HEK293 (cell line): ENCODE measurements at regions of chr3 and their contacts with region 1.

Region 1: GRCh38 chr3:72938471-72939265 is 50.8 kb downstream of the GXYLT2 start:
- H3K4me3 ChIP-seq: no peak overlapping the region
- H3K27ac ChIP-seq: no peak overlapping the region
- H3K4me1 ChIP-seq: no peaks in the 10 kb centered on the region
- CTCF ChIP-seq: peak; percentile 39; the same call in 1 of the 2 replicates

Region 2: DNA sequence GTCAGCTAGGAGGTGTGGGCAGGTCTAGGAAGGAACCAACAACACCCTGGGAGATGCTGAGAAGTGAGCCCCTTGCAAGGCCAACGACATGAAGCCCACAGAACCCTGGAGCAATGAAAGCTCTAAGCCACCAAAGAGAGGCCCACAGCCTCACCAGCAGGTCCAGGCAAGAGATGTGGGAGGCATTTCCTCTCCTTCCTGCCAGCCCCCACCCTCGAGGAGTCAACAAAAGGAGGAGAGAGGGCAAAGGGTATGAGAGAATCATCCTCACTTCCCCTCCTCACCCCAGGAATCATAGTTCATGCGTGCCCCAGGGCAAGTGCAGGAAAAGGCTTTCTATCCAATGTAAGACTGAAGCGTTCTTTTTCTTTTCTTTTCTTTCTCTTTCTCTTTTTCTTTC is 286.3 kb before region 1 on chr3:
- CTCF ChIA-PET with region 1: no interaction called
- POLR2A ChIA-PET with region 1: no interaction called
- H3K4me3 ChIP-seq: no peak overlapping the region
- H3K27ac ChIP-seq: no peak overlapping the region
- H3K4me1 ChIP-seq: no peaks in the 10 kb centered on the region
- CTCF ChIP-seq: no peak

Region 3: DNA sequence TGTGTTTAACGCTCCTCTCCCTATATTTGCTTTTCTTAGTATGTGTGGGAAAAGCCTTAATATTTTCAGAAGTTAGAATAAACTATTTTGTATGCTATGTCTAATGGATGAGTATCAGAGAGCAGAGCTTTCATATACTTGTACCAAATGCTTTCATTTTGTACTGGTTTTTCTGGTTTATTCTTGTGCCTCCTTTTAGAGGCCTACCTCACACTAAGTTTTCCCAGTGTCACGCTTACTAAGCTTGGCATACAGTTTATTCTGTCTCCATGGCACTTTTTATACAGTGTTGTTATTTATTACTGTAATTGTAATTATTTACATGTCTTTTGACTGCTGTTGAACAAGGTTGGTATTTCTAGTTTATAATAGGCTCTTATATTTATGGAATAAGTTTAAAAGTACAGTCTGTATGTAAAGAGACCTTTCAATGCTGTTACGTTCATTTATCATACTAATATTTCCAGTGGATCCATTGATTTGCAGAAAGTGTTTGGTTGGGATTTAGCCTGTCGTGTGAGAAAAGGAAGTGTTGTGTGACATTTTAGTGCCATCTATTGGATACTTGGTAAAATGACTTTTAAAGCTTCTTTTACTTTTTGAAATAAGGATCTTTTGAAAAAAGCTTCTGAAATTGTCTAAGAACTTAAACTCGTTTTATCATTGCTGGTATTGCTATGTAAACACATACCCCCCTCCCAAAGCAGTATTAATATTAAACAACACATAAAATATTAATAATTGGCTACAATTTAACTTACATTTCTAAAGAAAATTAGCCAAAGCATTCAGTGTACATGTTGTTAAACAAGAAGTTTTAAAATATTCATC is 117.6 kb after region 1 on chr3:
- CTCF ChIA-PET with region 1: interaction called, 13 read pairs
- POLR2A ChIA-PET with region 1: no interaction called
- H3K4me3 ChIP-seq: no peak overlapping the region
- H3K27ac ChIP-seq: no peak overlapping the region
- H3K4me1 ChIP-seq: no peaks in the 10 kb centered on the region
- CTCF ChIP-seq: no peak

Region 4: DNA sequence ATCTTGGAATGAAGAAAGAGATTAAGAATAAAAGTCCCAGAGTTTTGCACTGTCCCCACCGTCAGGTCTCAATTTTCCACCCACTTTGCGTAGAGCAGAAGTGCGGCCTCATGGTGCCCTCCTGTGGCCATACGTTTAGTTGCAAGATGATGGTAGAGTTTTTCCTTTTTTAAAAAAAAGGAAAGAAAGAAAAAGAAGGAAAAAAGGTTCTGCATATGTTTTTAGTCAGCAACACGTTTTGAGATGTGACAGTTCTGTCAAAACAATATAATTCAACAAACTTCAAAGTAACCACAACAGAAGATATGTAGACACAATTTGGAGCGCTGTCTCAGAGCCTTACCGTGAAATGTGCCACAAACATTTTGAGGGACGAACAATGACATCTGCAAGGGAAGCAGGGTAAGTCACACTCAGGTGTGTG is 147.4 kb after region 1 on chr3:
- CTCF ChIA-PET with region 1: interaction called, 12 read pairs
- POLR2A ChIA-PET with region 1: no interaction called
- H3K4me3 ChIP-seq: no peak overlapping the region
- H3K27ac ChIP-seq: no peak overlapping the region
- H3K4me1 ChIP-seq: no peaks in the 10 kb centered on the region
- CTCF ChIP-seq: peak; percentile 39; the same call in 1 of the 2 replicates